HEK293 (cell line): ENCODE measurements at regions of chr9 and their contacts with region 1.

Region 1: GRCh38 chr9:18442629-18443491 is 31.1 kb upstream of the ADAMTSL1 start:
- H3K4me3 ChIP-seq: no peak overlapping the region
- H3K27ac ChIP-seq: no peak overlapping the region
- H3K4me1 ChIP-seq: no peaks in the 10 kb centered on the region; the same call in 1 of the 2 replicates
- CTCF ChIP-seq: peak; percentile 56; the same call in 1 of the 2 replicates

Region 2: GRCh38 chr9:18058564-18059442 is 384.1 kb before region 1 on chr9:
- CTCF ChIA-PET with region 1: no interaction called
- POLR2A ChIA-PET with region 1: no interaction called
- H3K4me3 ChIP-seq: no peak overlapping the region
- H3K27ac ChIP-seq: no peak overlapping the region
- H3K4me1 ChIP-seq: no peaks in the 10 kb centered on the region
- CTCF ChIP-seq: no peak

Region 3: DNA sequence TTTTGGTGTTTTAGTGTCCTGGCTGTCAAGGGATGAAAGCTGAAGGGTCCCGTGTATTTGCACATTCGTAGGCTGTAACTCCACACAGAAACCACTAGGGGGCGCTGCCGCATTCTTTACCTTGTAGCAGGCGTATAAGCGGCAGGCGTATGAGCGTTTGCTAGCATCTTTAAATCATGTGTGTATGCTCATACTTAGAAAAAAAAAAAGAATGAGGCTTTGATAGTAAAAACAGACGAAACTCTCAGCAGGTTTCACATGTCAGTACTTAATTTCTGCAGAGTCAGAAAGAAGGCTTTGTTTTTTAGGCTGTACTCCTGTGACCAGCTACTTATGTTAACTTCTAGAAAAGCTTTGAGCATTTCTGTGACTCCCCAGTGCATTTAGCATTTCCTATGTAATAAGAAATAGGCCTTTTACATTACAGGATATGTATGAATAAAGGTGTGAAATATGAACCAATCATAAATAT is 187.7 kb before region 1 on chr9:
- CTCF ChIA-PET with region 1: interaction called, 117 read pairs
- POLR2A ChIA-PET with region 1: interaction called, 3 read pairs
- H3K4me3 ChIP-seq: no peak overlapping the region
- H3K27ac ChIP-seq: no peak overlapping the region
- H3K4me1 ChIP-seq: no peaks in the 10 kb centered on the region
- CTCF ChIP-seq: peak; percentile 34; the same call in 1 of the 2 replicates

Region 4: DNA sequence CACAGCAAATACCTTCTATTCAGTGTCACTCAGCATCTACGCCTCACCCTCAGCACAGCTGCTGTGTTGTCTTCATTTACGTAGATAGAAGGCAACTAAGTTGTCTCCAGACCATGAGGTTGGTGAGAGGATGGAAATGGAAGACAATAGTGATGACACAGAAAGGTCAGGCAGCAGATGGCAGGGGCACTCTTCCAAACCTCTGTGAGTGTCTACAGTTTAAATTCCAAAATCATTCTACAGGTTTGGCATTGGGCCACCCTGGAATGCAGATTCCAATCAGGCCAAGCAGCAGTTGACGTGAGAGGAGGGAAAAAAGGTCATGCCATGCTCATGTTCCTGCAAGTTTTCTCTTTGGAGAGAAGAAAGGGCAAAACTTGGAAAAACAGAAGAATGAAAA is 37.6 kb before region 1 on chr9:
- CTCF ChIA-PET with region 1: interaction called, 16 read pairs
- POLR2A ChIA-PET with region 1: no interaction called
- H3K4me3 ChIP-seq: no peak overlapping the region
- H3K27ac ChIP-seq: no peak overlapping the region
- H3K4me1 ChIP-seq: no peaks in the 10 kb centered on the region
- CTCF ChIP-seq: no peak

Region 5: DNA sequence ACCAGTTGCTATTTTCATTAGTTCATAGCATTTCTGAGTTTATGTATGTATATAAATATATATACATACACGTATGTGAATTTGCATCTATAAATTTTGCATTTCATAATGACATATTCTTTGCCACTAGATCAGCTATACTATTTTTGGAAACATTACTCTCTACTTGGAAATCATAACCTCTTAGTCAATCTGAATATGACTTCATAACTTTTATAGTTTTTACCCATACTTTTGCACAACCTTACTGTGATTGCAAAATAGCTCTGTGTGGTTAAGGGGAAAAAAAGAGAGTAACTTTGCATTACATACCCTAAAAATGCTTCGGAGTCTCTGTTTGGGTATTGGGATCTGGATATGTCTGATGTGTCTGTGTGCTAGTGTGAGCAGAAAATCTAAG is 13.8 kb before region 1 on chr9:
- CTCF ChIA-PET with region 1: interaction called, 33 read pairs
- POLR2A ChIA-PET with region 1: no interaction called
- H3K4me3 ChIP-seq: no peak overlapping the region
- H3K27ac ChIP-seq: no peak overlapping the region
- H3K4me1 ChIP-seq: no peaks in the 10 kb centered on the region; the same call in 1 of the 2 replicates
- CTCF ChIP-seq: no peak

Region 6: DNA sequence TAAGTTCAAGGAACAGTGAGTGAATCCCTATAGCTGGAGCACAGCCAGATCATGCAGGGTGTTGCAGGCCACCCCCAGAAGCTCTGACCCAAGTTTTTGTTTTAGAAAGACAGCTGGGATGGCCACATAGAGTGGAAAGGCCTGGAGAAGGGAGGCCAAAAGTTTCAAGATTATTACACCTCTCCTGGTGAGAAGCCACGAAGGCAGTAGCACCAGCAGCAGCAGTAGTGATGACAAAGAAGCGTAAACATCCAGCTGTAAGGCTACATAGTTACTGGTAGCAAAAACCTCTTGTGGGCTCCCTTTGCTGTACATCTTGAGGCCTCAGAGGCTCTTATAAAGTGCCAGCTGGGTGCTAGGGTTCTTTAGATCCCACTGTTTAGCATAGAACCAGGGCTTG is 42.9 kb after region 1 on chr9:
- CTCF ChIA-PET with region 1: interaction called, 15 read pairs
- POLR2A ChIA-PET with region 1: no interaction called
- H3K4me3 ChIP-seq: no peak overlapping the region
- H3K27ac ChIP-seq: no peak overlapping the region
- H3K4me1 ChIP-seq: peaks cover 3% of the 10 kb centered on the region; the same call in 1 of the 2 replicates
- CTCF ChIP-seq: no peak